Activated naive CD4-positive, alpha-beta T cell treated with anti-CD3 and anti-CD28 coated beads for 36 hours (primary cell): ENCODE measurements at regions of chr1 and their contacts with region 1.

Region 1: DNA sequence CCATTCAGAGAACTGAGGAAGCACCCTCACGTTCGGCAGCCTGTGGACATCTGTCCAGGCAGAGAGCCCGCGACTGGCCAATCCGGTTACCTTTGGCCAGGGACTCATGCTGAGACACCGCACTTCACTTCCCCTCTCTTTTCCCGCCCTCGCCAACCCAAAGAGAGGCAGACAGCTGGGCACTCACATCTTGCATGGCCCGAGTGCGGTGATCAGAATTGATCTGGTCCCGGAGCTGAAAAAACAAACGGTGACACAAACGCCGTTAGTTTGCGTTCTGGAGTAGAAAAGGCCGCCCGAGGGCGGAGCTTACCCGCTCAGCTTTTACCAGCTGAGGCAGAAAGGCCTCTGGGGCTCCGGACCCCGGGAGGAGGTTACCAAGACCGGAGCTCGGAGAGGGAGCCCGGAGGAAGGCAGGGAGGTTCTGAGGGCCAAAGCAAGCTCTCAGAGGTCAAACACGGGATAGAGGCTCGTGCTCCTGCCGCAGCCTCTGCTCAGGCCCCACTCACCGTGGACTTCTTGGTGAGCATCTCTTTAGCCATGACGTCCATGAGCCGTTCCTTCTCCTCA is 376 bp downstream of the SF3A3 start:
- DNase-seq: peak; percentile 53
- H3K4me3 Mint-ChIP-seq: peak overlapping the region; percentile 94
- H3K27ac Mint-ChIP-seq: peak overlapping the region; percentile 88
- H3K4me1 Mint-ChIP-seq: peaks cover 19% of the 10 kb centered on the region
- H3K27me3 Mint-ChIP-seq: no peaks in the 10 kb centered on the region

Region 2: DNA sequence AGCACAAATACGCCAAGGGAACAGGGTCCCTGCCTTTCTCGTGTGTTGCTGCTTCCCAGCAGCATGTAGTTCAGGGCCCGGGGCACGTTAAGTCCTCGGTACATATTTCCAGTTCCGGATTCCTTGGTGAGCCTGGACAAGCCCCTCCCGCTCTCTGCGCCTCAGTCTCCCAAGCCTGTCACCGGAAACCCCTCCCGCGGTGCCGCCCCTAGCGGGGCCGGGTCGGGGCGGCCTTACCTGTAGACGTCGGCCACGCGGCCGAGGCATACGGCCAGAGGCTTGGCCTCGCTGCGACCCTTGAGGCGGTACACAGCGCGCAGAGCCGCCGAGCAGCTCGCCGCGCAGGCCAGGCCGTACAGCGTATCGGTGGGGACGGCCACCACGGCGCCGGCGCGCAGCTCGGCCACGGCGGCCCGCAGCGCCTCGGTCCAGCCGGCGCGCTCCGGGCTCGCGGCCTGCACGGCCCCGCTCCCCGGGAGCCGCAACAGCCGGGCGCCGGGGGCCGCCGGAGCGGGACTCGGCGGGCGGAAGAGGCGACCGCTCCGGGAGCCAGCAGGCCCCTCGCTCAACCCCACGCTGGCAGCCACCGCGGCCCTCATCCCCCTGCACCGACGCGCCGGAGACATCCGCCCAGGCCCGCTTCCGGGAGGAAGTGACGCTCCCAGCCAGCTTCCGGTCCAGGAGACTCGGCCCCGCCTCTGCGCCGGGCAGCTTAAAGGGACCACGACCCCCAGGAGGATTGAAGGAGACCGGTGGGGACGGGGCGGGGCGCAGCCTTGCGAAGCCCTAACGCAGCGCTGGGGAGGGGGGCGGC is 181.7 kb before region 1 on chr1 and contains the starts of genes C1orf122 and YRDC:
- CTCF ChIA-PET with region 1: no interaction called
- intact Hi-C with region 1: loop called (anchors 2 kb)
- DNase-seq: peak; percentile 92
- H3K4me3 Mint-ChIP-seq: peak within 1 kb of the TSS; percentile 95
- H3K27ac Mint-ChIP-seq: peak within 1 kb of the TSS; percentile 93
- H3K4me1 Mint-ChIP-seq: peaks cover 40% of the 10 kb centered on the region
- H3K27me3 Mint-ChIP-seq: no peaks in the 10 kb centered on the region
- total RNA-seq, gene C1orf122: 12.8 to 14.2 TPM
- total RNA-seq, gene YRDC: 31.6 to 31.7 TPM

Region 3: GRCh38 chr1:37890378-37891014 is 99.0 kb before region 1 on chr1:
- CTCF ChIA-PET with region 1: interaction called, 3 read pairs
- intact Hi-C with region 1: loop called (anchors 1 kb)
- DNase-seq: no peak
- H3K4me3 Mint-ChIP-seq: no peak overlapping the region
- H3K27ac Mint-ChIP-seq: no peak overlapping the region
- H3K4me1 Mint-ChIP-seq: no peaks in the 10 kb centered on the region
- H3K27me3 Mint-ChIP-seq: no peaks in the 10 kb centered on the region

Region 4: GRCh38 chr1:38012363-38013226 is 23.1 kb after region 1 on chr1 and contains the start of gene UTP11:
- CTCF ChIA-PET with region 1: interaction called, 15 read pairs
- intact Hi-C with region 1: loop called (anchors 1 kb)
- DNase-seq: peak; percentile 96
- H3K4me3 Mint-ChIP-seq: peak within 1 kb of the TSS; percentile 98
- H3K27ac Mint-ChIP-seq: peak within 1 kb of the TSS; percentile 95
- H3K4me1 Mint-ChIP-seq: peaks cover 55% of the 10 kb centered on the region
- H3K27me3 Mint-ChIP-seq: no peaks in the 10 kb centered on the region
- total RNA-seq, gene UTP11: 49.7 to 49.8 TPM

Region 5: GRCh38 chr1:38834937-38835827 is 845.7 kb after region 1 on chr1:
- CTCF ChIA-PET with region 1: no interaction called
- intact Hi-C with region 1: loop called (anchors 1 kb)
- DNase-seq: peak; percentile 63
- H3K4me3 Mint-ChIP-seq: no peak overlapping the region
- H3K27ac Mint-ChIP-seq: no peak overlapping the region
- H3K4me1 Mint-ChIP-seq: no peaks in the 10 kb centered on the region
- H3K27me3 Mint-ChIP-seq: peaks cover 14% of the 10 kb centered on the region